ENCODE measurements at regions of chr19 and their contacts with region 1.

Region 1: DNA sequence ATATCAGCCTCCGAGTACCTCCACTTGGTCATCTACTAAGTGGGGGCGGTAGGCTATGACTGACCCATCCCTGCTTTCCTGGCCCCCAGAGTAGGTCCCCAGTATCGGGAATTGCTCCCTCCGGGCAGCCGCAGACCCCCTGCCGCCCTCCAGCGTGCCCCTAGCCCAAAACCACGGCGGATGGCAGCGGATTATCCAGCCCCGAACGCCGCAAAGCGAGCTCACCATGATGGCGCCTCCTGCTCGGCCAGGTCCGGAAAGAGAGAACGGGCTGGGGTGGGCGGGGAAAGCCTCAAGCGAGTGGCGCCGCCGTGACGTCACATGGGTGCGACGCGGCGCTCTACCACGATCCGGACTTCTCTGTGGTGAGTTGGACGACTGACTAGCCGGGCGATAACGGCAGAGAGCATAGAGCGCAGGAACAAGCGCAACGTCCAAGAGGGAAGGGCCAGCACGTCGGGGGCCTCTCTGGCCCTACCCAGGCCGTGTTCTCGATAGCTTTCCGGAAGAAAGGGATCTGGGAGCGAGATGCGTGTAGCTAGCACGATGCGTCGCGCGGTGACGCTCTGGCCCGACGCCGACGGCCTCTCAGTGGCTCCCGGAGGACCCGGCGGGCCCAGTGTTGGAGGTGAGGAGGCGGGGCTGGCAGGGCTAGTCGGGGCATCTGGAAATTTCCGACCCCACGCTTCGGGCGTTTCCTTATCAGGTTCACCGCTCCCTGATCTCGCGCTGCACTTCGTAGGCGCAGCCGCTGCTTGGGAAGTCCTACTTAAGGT is at the starts of genes RPL18 and SPHK2:
- DNase-seq: peak; percentile 96

Region 2: DNA sequence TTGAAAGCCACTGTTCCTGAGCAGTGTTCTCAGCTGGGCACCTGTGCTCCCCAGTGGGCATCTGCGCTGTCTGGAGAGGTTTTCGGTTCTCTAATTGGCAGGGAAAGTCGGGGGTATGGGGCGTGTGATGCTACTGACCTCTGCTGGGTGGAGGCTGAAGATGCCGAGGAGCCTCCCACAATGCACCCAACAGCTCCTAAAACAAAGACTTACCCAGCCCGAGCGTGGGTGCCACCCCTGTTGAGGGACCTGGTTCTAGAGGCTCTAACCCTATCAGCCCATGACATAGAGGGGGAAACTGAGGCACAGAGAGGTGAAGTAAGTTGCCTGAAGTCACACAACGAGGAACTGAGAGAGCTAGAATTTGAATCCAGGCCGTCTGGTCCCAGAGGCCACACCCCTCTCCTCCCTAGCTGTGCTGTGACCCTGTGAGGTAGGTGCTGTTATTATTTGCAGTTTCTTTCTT is 10.3 kb before region 1 on chr19:
- CTCF ChIA-PET with region 1: interaction called, 3 read pairs
- POLR2A ChIA-PET with region 1: interaction called, 53 read pairs
- DNase-seq: peak; percentile 61

Region 3: DNA sequence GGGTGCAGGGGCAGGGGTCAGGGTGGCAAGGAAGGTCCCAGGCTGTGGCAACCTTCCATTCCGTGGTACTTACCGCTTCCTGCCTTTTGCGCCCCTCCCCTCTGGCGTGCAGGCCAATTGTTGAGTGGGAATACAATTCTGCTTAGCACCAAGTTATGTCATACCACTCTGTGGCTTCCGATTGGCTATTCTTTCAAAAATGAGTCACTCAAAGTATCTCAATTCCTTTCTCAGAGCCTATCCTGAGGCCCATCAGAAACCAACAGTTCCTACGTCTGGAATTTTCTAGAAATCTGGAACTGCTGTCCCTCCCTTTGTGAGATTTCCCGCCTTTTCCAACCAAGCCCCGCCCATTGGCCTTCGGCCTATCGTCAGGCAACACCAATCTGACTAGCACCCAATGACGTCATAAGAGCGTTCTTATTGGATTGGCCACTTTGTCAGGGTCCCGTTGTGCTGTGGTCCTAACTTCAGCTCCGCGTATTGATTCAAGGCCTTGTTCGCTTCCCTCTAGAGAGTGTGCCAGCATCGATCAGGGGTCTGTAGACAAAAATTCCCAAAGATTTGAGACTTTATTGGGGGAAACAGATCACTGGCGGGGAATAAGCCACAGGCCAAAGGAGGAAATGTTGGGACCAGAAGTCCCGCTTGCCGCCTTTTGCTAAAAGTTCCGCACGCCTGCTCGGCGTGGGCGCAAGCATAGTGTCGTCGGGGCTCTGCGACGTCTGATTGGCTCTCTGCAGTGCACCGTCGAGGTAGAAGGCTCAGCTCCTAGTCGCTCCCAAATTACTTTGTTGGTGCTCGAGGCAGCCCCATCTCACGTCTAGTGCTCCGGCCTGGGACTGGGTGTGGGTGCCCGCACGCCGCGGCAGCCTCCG is 42.0 kb after region 1 on chr19:
- CTCF ChIA-PET with region 1: no interaction called
- POLR2A ChIA-PET with region 1: no interaction called
- DNase-seq: peak; percentile 97

Region 4: GRCh38 chr19:48683349-48683748 is 64.2 kb after region 1 on chr19:
- CTCF ChIA-PET with region 1: no interaction called
- POLR2A ChIA-PET with region 1: no interaction called
- DNase-seq: no peak

Measured in HEK293T (cell line).